ENCODE measurements at regions of chr16 and their contacts with region 1.

Region 1: DNA sequence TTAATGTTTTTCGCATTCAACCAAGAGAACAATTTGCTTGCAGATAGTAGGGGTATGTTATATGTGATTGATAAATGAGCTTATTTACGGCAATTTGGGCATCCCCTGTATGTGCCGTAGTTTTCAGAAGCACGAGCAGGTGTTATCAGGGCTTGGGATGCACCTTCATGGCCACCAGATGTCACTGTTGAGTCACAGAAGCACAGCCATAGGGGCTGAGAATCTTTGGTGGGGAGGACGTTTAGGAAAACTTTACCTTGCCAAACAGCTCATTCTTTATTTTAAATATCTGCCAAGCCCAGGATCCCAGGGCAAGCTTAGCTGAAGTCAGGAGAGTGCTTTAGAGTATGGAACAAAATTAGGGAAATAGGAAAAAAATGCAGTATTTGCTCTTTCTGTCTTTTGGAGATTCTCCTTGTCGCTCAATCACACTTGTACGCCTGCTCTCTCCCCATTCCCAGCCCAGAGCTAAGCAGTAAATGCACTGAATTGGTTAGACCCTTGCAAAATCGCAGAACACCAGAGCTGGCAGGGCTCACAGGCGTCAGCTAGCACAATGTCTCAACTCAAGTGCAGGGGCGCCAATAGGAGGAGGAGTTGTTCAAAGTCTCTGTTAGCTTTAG is 93.6 kb upstream of the MPHOSPH6 start:
- DNase-seq: peak; percentile 63
- ATAC-seq: peak; percentile 95
- H3K4me3 Mint-ChIP-seq: no peak overlapping the region
- H3K27ac Mint-ChIP-seq: no peak overlapping the region
- H3K4me1 Mint-ChIP-seq: peaks cover 14% of the 10 kb centered on the region
- H3K27me3 Mint-ChIP-seq: no peaks in the 10 kb centered on the region; the same call in 1 of the 2 replicates
- CTCF ChIP-seq: peak; percentile 79

Region 2: GRCh38 chr16:82031116-82032084 is 232.2 kb before region 1 on chr16:
- CTCF ChIA-PET with region 1: interaction called, 10 read pairs
- POLR2A ChIA-PET with region 1: no interaction called
- DNase-seq: no peak
- ATAC-seq: peak; percentile 67
- H3K4me3 Mint-ChIP-seq: no peak overlapping the region
- H3K27ac Mint-ChIP-seq: no peak overlapping the region
- H3K4me1 Mint-ChIP-seq: no peaks in the 10 kb centered on the region; the same call in 1 of the 2 replicates
- H3K27me3 Mint-ChIP-seq: no peaks in the 10 kb centered on the region
- CTCF ChIP-seq: peak; percentile 13; the same call in 1 of the 2 replicates

Region 3: GRCh38 chr16:82240111-82240510 is 23.5 kb before region 1 on chr16:
- CTCF ChIA-PET with region 1: interaction called, 21 read pairs
- POLR2A ChIA-PET with region 1: no interaction called
- DNase-seq: no peak
- ATAC-seq: no peak
- H3K4me3 Mint-ChIP-seq: no peak overlapping the region
- H3K27ac Mint-ChIP-seq: no peak overlapping the region
- H3K4me1 Mint-ChIP-seq: peaks cover 8% of the 10 kb centered on the region
- H3K27me3 Mint-ChIP-seq: 0 out of 2 replicates have a peak, but pooled peaks cover 2% of the 10 kb centered on the region
- CTCF ChIP-seq: no peak

Region 4: GRCh38 chr16:82344157-82344556 is 80.5 kb after region 1 on chr16:
- CTCF ChIA-PET with region 1: interaction called, 132 read pairs
- POLR2A ChIA-PET with region 1: no interaction called
- DNase-seq: peak; percentile 27
- ATAC-seq: peak; percentile 89
- H3K4me3 Mint-ChIP-seq: no peak overlapping the region
- H3K27ac Mint-ChIP-seq: no peak overlapping the region
- H3K4me1 Mint-ChIP-seq: peaks cover 25% of the 10 kb centered on the region
- H3K27me3 Mint-ChIP-seq: no peaks in the 10 kb centered on the region
- CTCF ChIP-seq: peak; percentile 33; the same call in 1 of the 2 replicates

Region 5: GRCh38 chr16:82439671-82440293 is 176.2 kb after region 1 on chr16:
- CTCF ChIA-PET with region 1: interaction called, 12 read pairs
- POLR2A ChIA-PET with region 1: no interaction called
- DNase-seq: peak; percentile 43
- ATAC-seq: peak; percentile 92
- H3K4me3 Mint-ChIP-seq: no peak overlapping the region
- H3K27ac Mint-ChIP-seq: no peak overlapping the region
- H3K4me1 Mint-ChIP-seq: peaks cover 13% of the 10 kb centered on the region
- H3K27me3 Mint-ChIP-seq: no peaks in the 10 kb centered on the region
- CTCF ChIP-seq: peak; percentile 49

Region 6: GRCh38 chr16:82580298-82580890 is 316.8 kb after region 1 on chr16:
- CTCF ChIA-PET with region 1: interaction called, 26 read pairs
- POLR2A ChIA-PET with region 1: no interaction called
- DNase-seq: peak; percentile 25
- ATAC-seq: peak; percentile 73
- H3K4me3 Mint-ChIP-seq: no peak overlapping the region
- H3K27ac Mint-ChIP-seq: no peak overlapping the region
- H3K4me1 Mint-ChIP-seq: no peaks in the 10 kb centered on the region
- H3K27me3 Mint-ChIP-seq: no peaks in the 10 kb centered on the region; the same call in 1 of the 2 replicates
- CTCF ChIP-seq: no peak

Region 7: DNA sequence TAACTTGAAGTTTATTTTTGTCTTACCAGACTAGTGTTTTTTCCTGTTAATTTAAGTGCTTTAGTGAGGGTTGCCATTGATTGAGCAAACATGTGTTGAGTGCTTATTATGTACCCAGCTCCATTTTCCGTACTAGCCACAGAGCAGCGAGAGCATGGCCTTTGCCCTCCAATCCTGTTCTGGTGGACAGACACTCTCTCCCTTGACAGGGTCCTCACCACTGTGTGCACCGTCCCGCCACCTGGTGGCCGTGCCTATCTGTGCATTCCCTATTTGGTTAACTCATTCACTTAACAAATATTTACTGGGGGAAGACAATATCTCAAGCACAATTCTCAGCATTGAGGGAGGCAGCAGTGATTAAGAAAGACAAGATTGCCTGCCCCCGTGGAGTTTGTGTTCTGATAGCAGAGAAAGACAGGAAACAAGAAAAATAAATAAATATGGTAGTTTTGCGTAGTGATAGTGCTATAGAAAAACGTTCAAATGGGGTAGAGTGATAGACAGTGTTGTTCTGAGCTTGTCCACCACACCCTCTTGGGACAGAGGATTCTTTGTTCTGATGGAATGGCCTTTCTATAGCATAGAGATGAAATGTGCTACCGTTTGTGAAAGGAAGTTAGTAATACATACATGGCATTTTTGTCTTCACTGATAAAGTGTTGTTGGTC is 376.2 kb after region 1 on chr16:
- CTCF ChIA-PET with region 1: interaction called, 23 read pairs
- POLR2A ChIA-PET with region 1: no interaction called
- DNase-seq: peak; percentile 80
- ATAC-seq: peak; percentile 79
- H3K4me3 Mint-ChIP-seq: no peak overlapping the region
- H3K27ac Mint-ChIP-seq: no peak overlapping the region
- H3K4me1 Mint-ChIP-seq: peaks cover 34% of the 10 kb centered on the region
- H3K27me3 Mint-ChIP-seq: no peaks in the 10 kb centered on the region
- CTCF ChIP-seq: peak; percentile 86

Measured in WTC11 (cell line).